OCI-LY7 (cell line): ENCODE measurements at regions of chr7 and their contacts with region 1.

Region 1: GRCh38 chr7:88243345-88243909 is 23.6 kb upstream of the SRI start:
- DNase-seq: peak; percentile 24
- H3K4me3 ChIP-seq: no peak overlapping the region
- H3K27ac ChIP-seq: no peak overlapping the region
- H3K4me1 ChIP-seq: no peaks in the 10 kb centered on the region
- CTCF ChIP-seq: peak; percentile 83

Region 2: DNA sequence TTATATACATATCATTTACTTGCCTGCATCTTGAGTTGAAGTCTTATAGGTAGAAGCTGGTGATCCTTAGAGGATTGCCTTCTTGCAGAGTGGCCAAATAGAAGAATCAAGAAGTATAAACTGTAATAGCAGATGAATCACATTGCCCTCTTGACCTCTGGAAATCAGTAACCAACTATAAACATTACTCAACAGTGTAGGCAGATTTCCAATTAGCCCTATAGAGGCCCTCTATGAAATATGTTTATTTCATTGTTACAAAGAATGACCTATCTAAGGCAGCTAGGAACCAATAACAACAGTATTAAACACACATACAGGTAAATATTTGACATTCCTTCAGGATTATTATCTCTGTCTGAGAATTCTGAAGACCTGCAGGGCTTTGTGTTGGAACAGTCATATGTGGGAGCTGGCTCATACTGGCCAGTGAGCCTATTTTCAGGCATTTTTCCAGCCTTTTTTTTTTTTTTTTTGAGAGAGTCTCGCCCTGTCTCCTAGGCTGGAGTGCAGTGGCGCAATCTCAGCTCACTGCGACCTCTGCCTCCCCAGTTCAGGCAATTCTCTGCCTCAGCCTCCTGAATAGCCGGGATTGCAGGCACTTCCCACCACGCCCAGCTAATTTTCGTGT is 16.4 kb before region 1 on chr7:
- CTCF ChIA-PET with region 1: no interaction called
- POLR2A ChIA-PET with region 1: no interaction called
- intact Hi-C with region 1: no loop called
- DNase-seq: no peak
- H3K4me3 ChIP-seq: no peak overlapping the region
- H3K27ac ChIP-seq: no peak overlapping the region
- H3K4me1 ChIP-seq: no peaks in the 10 kb centered on the region
- CTCF ChIP-seq: no peak

Region 3: GRCh38 chr7:88357781-88358525 is 114.5 kb after region 1 on chr7:
- CTCF ChIA-PET with region 1: interaction called, 5 read pairs
- POLR2A ChIA-PET with region 1: no interaction called
- intact Hi-C with region 1: loop called (anchors 1 kb)
- DNase-seq: peak; percentile 1
- H3K4me3 ChIP-seq: no peak overlapping the region
- H3K27ac ChIP-seq: no peak overlapping the region
- H3K4me1 ChIP-seq: no peaks in the 10 kb centered on the region
- CTCF ChIP-seq: peak; percentile 66

Region 4: GRCh38 chr7:88835147-88835728 is 591.8 kb after region 1 on chr7:
- CTCF ChIA-PET with region 1: no interaction called
- POLR2A ChIA-PET with region 1: no interaction called
- intact Hi-C with region 1: loop called (anchors 10 kb)
- DNase-seq: peak; percentile 33
- H3K4me3 ChIP-seq: no peak overlapping the region
- H3K27ac ChIP-seq: no peak overlapping the region
- H3K4me1 ChIP-seq: no peaks in the 10 kb centered on the region
- CTCF ChIP-seq: peak; percentile 73

Region 5: DNA sequence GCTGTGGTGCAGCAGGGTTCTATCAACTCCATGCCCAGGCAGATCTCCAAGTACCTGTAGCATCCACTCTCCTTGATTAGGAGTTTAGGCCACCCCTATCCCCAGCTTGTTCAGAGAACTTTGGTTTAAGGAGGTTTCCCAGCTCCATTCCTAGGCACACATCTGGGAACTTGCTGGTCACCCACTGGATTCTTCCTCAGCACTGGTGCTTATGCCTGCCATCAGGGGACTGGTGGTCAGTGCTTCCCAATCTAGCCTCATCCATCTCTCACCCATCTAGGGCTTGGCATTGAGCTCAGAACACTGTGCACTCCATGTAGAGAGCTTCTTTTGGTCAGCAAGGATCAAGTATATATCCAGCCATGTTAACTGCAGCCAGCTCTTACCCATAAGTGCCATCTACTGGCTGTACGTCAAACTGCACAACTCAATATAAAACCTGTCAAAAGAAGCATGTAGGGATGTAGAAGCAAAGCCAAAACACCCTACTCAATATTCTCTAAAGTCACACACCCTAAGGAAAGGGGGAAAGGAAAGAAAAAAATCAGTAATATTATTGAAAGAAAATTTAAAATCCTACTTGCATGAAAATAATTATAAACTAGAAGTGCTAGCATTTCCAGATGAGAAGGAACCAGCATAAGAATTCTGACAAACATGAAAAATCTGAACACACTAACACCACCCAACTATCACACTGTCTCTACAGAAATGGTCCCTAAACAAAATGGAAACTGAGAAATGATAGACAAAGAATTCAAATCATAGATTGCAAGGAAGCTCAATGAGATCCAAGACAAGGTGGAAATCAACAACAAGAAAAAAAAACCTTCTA is 1379.6 kb after region 1 on chr7:
- CTCF ChIA-PET with region 1: no interaction called
- POLR2A ChIA-PET with region 1: no interaction called
- intact Hi-C with region 1: loop called (anchors 10 kb)
- DNase-seq: peak; percentile 29
- H3K4me3 ChIP-seq: no peak overlapping the region
- H3K27ac ChIP-seq: no peak overlapping the region
- H3K4me1 ChIP-seq: no peaks in the 10 kb centered on the region
- CTCF ChIP-seq: peak; percentile 83